OCI-LY7 (cell line): ENCODE measurements at regions of chr11 and their contacts with region 1.

Region 1: DNA sequence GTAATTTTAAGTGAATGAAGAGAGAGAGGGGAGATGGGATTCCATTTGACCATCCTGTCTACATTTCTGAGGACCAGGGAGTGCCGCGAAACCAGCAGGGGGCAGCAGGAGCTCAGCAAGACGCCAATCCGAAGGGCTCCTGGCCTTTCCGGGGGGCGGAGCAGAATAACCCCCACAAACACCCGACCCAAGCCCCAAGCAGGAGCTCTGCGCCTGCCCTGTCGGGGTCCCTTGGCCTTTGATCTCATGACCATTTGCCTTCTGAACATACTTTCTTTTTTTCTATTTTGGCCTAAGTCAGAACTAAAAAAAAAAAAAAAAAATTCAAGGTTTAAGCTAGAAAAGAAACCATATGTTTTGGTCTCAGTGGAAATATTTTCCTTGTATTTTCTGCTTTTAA is 21.9 kb upstream of the SCN2B start:
- DNase-seq: peak; percentile 87
- H3K4me3 ChIP-seq: peak overlapping the region; percentile 8
- H3K27ac ChIP-seq: no peak overlapping the region
- H3K4me1 ChIP-seq: no peaks in the 10 kb centered on the region
- CTCF ChIP-seq: peak; percentile 98

Region 2: DNA sequence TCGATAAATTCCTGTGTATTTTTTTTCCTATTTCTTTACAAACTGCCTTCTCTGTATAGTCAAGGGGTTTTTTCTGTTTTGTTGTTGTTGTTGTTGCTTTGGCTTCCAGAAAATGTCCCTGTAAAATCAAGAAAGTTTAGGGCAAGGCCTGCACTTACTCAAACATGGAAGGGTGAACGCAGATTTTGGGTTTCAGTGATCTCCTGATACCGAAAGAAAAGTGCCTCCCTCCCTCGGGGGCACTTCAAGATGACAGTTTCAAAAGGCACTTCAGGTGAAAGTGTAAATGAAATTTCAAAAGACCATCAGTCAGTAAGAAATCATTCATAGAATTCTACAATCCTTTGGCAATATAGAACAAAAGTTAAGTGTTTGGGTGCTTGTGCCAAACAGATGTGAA is 164.9 kb before region 1 on chr11:
- CTCF ChIA-PET with region 1: no interaction called
- POLR2A ChIA-PET with region 1: no interaction called
- intact Hi-C with region 1: no loop called
- DNase-seq: no peak
- H3K4me3 ChIP-seq: no peak overlapping the region
- H3K27ac ChIP-seq: no peak overlapping the region
- H3K4me1 ChIP-seq: no peaks in the 10 kb centered on the region
- CTCF ChIP-seq: no peak

Region 3: DNA sequence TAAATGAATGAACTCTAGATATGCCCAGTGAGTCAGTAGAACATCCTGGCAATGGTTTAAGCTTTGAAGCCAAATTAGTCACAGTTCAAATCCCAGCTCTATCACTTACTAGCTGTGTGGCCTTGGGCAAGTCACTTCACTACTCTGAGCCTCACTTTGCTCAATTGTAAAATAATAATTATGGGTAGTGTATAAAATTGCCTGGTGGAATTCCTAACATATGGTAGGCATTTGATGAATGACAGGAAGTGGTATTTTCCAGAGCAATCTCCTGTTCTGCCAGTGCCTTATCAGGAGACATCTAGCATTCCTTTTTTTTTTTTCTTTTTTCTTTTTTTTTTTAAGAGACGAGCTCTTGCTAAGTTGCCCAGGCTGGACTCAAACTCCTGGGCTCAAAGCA is 58.8 kb before region 1 on chr11:
- CTCF ChIA-PET with region 1: no interaction called
- POLR2A ChIA-PET with region 1: no interaction called
- intact Hi-C with region 1: no loop called
- DNase-seq: no peak
- H3K4me3 ChIP-seq: no peak overlapping the region
- H3K27ac ChIP-seq: no peak overlapping the region
- H3K4me1 ChIP-seq: no peaks in the 10 kb centered on the region
- CTCF ChIP-seq: no peak

Region 4: GRCh38 chr11:118258410-118258809 is 60.0 kb after region 1 on chr11:
- CTCF ChIA-PET with region 1: no interaction called
- POLR2A ChIA-PET with region 1: interaction called, 3 read pairs
- intact Hi-C with region 1: loop called (anchors 5 kb)
- DNase-seq: peak; percentile 29
- H3K4me3 ChIP-seq: no peak overlapping the region
- H3K27ac ChIP-seq: no peak overlapping the region
- H3K4me1 ChIP-seq: no peaks in the 10 kb centered on the region
- CTCF ChIP-seq: peak; percentile 73

Region 5: DNA sequence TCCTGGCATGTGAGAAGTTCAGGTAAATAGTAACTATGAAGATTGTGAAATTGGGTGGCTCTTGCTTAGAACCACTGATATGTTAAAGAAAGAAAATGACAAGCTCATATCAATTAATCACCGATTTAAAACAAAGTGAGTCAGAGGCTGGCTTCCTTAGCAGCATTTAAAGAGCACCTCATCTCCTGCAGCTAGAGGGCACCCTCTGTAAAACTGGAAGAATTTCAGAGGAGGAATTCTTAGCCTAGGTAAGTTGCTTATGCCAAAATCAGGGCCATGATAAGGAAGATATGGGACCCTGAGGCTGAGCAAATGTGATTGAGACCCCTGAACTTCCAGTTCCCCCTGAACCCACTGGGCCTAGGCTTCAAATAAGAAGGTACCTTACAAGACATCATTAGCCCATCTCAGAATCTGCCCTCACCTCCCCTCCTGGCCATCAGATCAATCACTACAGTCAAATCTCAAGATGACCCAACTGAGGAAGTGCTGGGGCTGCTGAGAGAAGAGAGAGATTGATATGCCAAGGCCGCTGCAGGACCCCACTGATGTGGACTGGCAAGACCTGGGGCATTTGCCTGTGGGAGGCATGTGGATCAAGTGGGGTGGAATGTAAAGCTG is 97.6 kb after region 1 on chr11:
- CTCF ChIA-PET with region 1: interaction called, 10 read pairs
- POLR2A ChIA-PET with region 1: interaction called, 5 read pairs
- intact Hi-C with region 1: no loop called
- DNase-seq: peak; percentile 67
- H3K4me3 ChIP-seq: no peak overlapping the region
- H3K27ac ChIP-seq: no peak overlapping the region
- H3K4me1 ChIP-seq: peaks cover 6% of the 10 kb centered on the region
- CTCF ChIP-seq: peak; percentile 91

Region 6: GRCh38 chr11:118353084-118353710 is 154.8 kb after region 1 on chr11:
- CTCF ChIA-PET with region 1: interaction called, 5 read pairs
- POLR2A ChIA-PET with region 1: interaction called, 3 read pairs
- intact Hi-C with region 1: loop called (anchors 1 kb)
- DNase-seq: peak; percentile 60
- H3K4me3 ChIP-seq: no peak overlapping the region
- H3K27ac ChIP-seq: no peak overlapping the region
- H3K4me1 ChIP-seq: peaks cover 5% of the 10 kb centered on the region
- CTCF ChIP-seq: peak; percentile 92

Region 7: DNA sequence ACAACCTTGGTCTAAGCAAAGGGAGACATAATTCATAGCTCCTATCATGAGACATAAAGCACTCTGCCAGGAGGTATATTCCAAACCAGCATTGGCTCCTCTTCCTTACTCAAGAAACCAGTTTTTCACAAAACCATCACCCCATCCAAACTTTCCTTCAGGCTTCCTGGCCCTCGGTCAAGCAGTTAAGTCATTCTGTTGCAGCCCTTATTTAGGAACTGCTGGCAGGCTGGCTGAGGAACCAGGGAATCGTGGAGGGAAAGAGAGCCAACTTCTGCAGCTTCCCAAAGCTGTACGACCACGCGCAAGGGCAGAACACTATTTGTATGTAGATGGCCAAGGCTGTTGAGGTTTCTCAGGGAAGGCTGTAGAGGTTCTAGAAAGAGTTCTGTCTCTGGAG is 366.7 kb after region 1 on chr11:
- CTCF ChIA-PET with region 1: no interaction called
- POLR2A ChIA-PET with region 1: no interaction called
- intact Hi-C with region 1: loop called (anchors 10 kb)
- DNase-seq: no peak
- H3K4me3 ChIP-seq: peak overlapping the region; percentile 21
- H3K27ac ChIP-seq: no peak overlapping the region
- H3K4me1 ChIP-seq: no peaks in the 10 kb centered on the region
- CTCF ChIP-seq: no peak